ENCODE measurements at regions of chr20 and their contacts with region 1.

Region 1: GRCh38 chr20:57514273-57514751 is 10.6 kb downstream of the CTCFL start:
- DNase-seq: peak; percentile 56
- H3K4me3 ChIP-seq: no peak overlapping the region
- H3K27ac ChIP-seq: no peak overlapping the region
- H3K4me1 ChIP-seq: no peaks in the 10 kb centered on the region
- H3K27me3 ChIP-seq: peaks cover 9% of the 10 kb centered on the region; the same call in 1 of the 2 replicates
- CTCF ChIP-seq: peak; percentile 92

Region 2: GRCh38 chr20:57596998-57597939 is 83.0 kb after region 1 on chr20:
- CTCF ChIA-PET with region 1: interaction called, 11 read pairs
- POLR2A ChIA-PET with region 1: no interaction called
- intact Hi-C with region 1: loop called (anchors 1 kb)
- DNase-seq: peak in 1 of 2 experiments; percentile 73
- H3K4me3 ChIP-seq: peak overlapping the region; percentile 43; the same call in 1 of the 2 replicates
- H3K27ac ChIP-seq: no peak overlapping the region
- H3K4me1 ChIP-seq: peaks cover 4% of the 10 kb centered on the region; the same call in 1 of the 2 replicates
- H3K27me3 ChIP-seq: peaks cover 6% of the 10 kb centered on the region; the same call in 1 of the 2 replicates
- CTCF ChIP-seq: peak; percentile 97

Region 3: GRCh38 chr20:57617079-57617795 is 102.9 kb after region 1 on chr20:
- CTCF ChIA-PET with region 1: interaction called, 11 read pairs
- POLR2A ChIA-PET with region 1: no interaction called
- intact Hi-C with region 1: no loop called
- DNase-seq: no peak
- H3K4me3 ChIP-seq: no peak overlapping the region
- H3K27ac ChIP-seq: no peak overlapping the region
- H3K4me1 ChIP-seq: peaks cover 24% of the 10 kb centered on the region
- H3K27me3 ChIP-seq: no peaks in the 10 kb centered on the region
- CTCF ChIP-seq: no peak